ENCODE measurements at regions of chr6 and their contacts with region 1.

Region 1: GRCh38 chr6:161370880-161371279 is 97.0 kb upstream of the AGPAT4 start:
- DNase-seq: peak; percentile 54
- H3K4me3 Mint-ChIP-seq: no peak overlapping the region
- H3K27ac Mint-ChIP-seq: no peak overlapping the region
- H3K4me1 Mint-ChIP-seq: no peaks in the 10 kb centered on the region
- H3K27me3 Mint-ChIP-seq: no peaks in the 10 kb centered on the region

Region 2: GRCh38 chr6:160871320-160871719 is 499.6 kb before region 1 on chr6:
- intact Hi-C with region 1: no loop called
- DNase-seq: no peak
- H3K4me3 Mint-ChIP-seq: no peak overlapping the region
- H3K27ac Mint-ChIP-seq: no peak overlapping the region
- H3K4me1 Mint-ChIP-seq: no peaks in the 10 kb centered on the region
- H3K27me3 Mint-ChIP-seq: peaks cover 1% of the 10 kb centered on the region

Region 3: GRCh38 chr6:160899671-160900430 is 471.0 kb before region 1 on chr6:
- intact Hi-C with region 1: no loop called
- DNase-seq: no peak
- H3K4me3 Mint-ChIP-seq: no peak overlapping the region
- H3K27ac Mint-ChIP-seq: no peak overlapping the region
- H3K4me1 Mint-ChIP-seq: no peaks in the 10 kb centered on the region
- H3K27me3 Mint-ChIP-seq: peaks cover 9% of the 10 kb centered on the region

Region 4: GRCh38 chr6:160930547-160931377 is 440.1 kb before region 1 on chr6:
- intact Hi-C with region 1: loop called (anchors 1 kb)
- DNase-seq: peak; percentile 31
- H3K4me3 Mint-ChIP-seq: no peak overlapping the region
- H3K27ac Mint-ChIP-seq: no peak overlapping the region
- H3K4me1 Mint-ChIP-seq: no peaks in the 10 kb centered on the region
- H3K27me3 Mint-ChIP-seq: peaks cover 18% of the 10 kb centered on the region

Region 5: DNA sequence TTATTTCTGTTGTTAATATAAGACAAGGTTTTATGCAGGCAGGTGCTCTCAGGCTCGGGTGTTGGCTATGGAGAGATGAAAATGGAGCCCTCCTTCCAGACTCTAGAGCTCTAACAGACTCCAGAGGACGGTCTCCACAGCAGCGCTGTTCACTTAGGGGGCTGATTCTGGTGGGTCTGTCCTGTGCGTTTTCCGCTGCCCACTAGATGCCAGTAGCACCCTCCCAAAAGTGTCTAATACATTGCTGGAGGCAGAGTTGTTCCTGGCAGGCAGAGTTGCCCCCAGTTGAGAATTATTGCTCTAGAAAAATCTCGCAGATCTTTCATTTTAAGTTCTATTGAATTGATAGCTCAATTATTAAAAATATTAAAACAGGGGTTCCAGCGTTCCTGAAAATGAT is 269.4 kb before region 1 on chr6:
- intact Hi-C with region 1: loop called (anchors 5 kb)
- DNase-seq: no peak
- H3K4me3 Mint-ChIP-seq: no peak overlapping the region
- H3K27ac Mint-ChIP-seq: no peak overlapping the region
- H3K4me1 Mint-ChIP-seq: peaks cover 10% of the 10 kb centered on the region
- H3K27me3 Mint-ChIP-seq: no peaks in the 10 kb centered on the region

Region 6: GRCh38 chr6:161152907-161153662 is 217.8 kb before region 1 on chr6:
- intact Hi-C with region 1: loop called (anchors 1 kb)
- DNase-seq: no peak
- H3K4me3 Mint-ChIP-seq: no peak overlapping the region
- H3K27ac Mint-ChIP-seq: peak overlapping the region; percentile 58
- H3K4me1 Mint-ChIP-seq: no peaks in the 10 kb centered on the region
- H3K27me3 Mint-ChIP-seq: no peaks in the 10 kb centered on the region

Region 7: DNA sequence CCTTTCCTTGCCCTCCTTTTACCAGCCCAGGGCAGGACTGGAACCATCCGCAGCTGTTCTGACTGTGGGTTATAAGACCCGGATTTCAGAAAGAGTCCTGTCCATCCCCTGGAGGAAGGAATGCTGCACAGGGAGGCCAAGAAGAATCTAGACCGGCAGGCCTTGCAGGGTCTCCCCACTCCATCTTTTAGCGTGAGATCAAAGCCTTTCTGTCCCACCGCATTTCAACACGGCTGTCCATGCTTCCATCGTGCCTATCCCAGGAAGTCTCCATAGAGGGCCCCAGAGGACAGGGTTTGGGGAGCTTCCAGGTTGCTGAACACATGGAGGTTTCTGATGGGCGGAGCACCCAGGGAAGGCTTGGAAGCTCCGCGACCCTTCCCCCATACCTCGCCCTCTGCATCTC is 17.7 kb before region 1 on chr6:
- intact Hi-C with region 1: no loop called
- DNase-seq: no peak
- H3K4me3 Mint-ChIP-seq: no peak overlapping the region
- H3K27ac Mint-ChIP-seq: no peak overlapping the region
- H3K4me1 Mint-ChIP-seq: no peaks in the 10 kb centered on the region
- H3K27me3 Mint-ChIP-seq: no peaks in the 10 kb centered on the region

Measured in activated T-helper 1 cell treated with anti-CD3 and anti-CD28 coated beads, Interleukin-12 subunit alpha, Interleukin-12 subunit beta, Interleukin-2, Interleukin-4 antibody, amounts not matched to agents 30 ng/mL and 10 ng/mL and 1 ng/mL, durations not matched to agents 14 hours and 24 hours and 36 hours (primary cell).